ENCODE measurements at regions of chr15 and their contacts with region 1.

Region 1: DNA sequence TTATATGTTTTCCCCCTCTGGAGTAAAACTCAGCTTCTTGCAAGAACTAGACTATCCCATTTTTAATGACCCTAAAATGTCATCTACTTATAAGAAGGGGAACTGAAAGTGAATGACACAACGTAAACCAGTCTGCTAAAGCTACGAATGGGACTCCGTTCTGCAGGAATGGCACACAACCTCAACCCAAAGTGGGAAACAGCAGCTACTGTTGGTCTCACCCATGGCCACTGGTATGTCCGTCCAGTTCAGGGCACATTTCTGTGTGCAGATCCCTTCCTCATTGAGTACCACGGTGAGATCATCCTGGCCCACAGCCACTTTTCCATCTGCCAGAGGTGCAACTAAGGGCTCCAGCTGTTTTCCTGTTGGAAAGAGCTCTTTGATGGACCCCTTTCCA is 23.8 kb downstream of the VPS39 start:
- DNase-seq: no peak
- ATAC-seq: no peak
- H3K4me3 ChIP-seq: no peak overlapping the region
- H3K27ac ChIP-seq: no peak overlapping the region
- H3K4me1 ChIP-seq: no peaks in the 10 kb centered on the region
- H3K27me3 ChIP-seq: no peaks in the 10 kb centered on the region
- CTCF ChIP-seq: no peak
- POLR2A ChIP-seq: no peak

Region 2: GRCh38 chr15:41838400-41838897 is 345.8 kb before region 1 on chr15 and contains the start of gene PLA2G4B:
- in situ Hi-C with region 1: no loop called
- intact Hi-C with region 1: loop called (anchors 5 kb)
- DNase-seq: peak; percentile 60 to 87
- ATAC-seq: peak; percentile 81 to 92
- H3K4me3 ChIP-seq: no peak within 1 kb of the TSS
- H3K27ac ChIP-seq: peak within 1 kb of the TSS; percentile 51 to 66 (median 56)
- H3K4me1 ChIP-seq: peaks cover 8 to 13% of the 10 kb centered on the region in 2 donors
- H3K27me3 ChIP-seq: no peaks in the 10 kb centered on the region
- CTCF ChIP-seq: no peak
- POLR2A ChIP-seq: no peak
- total RNA-seq, gene PLA2G4B: 0.13 to 11.5 TPM in 2 of 4 donors, not detected in the others

Region 3: DNA sequence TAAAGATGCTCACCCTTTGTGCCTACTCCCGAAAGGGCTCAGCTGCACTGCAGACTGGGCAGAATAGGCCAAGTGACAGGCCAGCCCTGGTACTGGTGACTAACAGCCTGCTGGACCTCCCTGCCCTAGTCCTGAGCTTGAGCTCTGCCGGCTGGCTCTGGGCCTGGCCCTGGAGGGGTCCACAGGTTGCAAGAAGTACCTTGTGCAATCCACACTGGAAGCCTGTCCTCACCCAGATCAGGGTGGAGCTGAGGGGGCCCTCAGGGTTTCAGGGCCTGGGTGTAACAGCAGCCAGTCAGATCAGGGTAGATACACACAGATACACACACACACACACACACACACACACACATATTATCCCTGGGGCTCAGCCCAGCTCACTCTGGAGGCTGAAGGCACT is 62.6 kb before region 1 on chr15:
- in situ Hi-C with region 1: no loop called
- intact Hi-C with region 1: loop called (anchors 10 kb)
- DNase-seq: peak in 1 of 2 donors; percentile 32
- ATAC-seq: peak in 1 of 2 donors; percentile 58
- H3K4me3 ChIP-seq: no peak overlapping the region
- H3K27ac ChIP-seq: no peak overlapping the region
- H3K4me1 ChIP-seq: no peaks in the 10 kb centered on the region
- H3K27me3 ChIP-seq: no peaks in the 10 kb centered on the region
- CTCF ChIP-seq: no peak
- POLR2A ChIP-seq: no peak

Region 4: GRCh38 chr15:42344763-42345162 is 160.5 kb after region 1 on chr15:
- in situ Hi-C with region 1: no loop called
- intact Hi-C with region 1: no loop called
- DNase-seq: peak; percentile 62 to 70
- ATAC-seq: peak; percentile 93 to 94
- H3K4me3 ChIP-seq: peak overlapping the region in 1 of 4 donors; percentile 16
- H3K27ac ChIP-seq: peak overlapping the region; percentile 85 to 92 (median 88)
- H3K4me1 ChIP-seq: peaks cover 32 to 39% of the 10 kb centered on the region in 2 donors
- H3K27me3 ChIP-seq: no peaks in the 10 kb centered on the region
- CTCF ChIP-seq: no peak
- POLR2A ChIP-seq: no peak

Measured in gastrocnemius medialis (tissue), 4 donors.